Activated B cell treated with CpG ODN at 0.5 μM for 24 hours (primary cell): ENCODE measurements at regions of chr6 and their contacts with region 1.

Region 1: DNA sequence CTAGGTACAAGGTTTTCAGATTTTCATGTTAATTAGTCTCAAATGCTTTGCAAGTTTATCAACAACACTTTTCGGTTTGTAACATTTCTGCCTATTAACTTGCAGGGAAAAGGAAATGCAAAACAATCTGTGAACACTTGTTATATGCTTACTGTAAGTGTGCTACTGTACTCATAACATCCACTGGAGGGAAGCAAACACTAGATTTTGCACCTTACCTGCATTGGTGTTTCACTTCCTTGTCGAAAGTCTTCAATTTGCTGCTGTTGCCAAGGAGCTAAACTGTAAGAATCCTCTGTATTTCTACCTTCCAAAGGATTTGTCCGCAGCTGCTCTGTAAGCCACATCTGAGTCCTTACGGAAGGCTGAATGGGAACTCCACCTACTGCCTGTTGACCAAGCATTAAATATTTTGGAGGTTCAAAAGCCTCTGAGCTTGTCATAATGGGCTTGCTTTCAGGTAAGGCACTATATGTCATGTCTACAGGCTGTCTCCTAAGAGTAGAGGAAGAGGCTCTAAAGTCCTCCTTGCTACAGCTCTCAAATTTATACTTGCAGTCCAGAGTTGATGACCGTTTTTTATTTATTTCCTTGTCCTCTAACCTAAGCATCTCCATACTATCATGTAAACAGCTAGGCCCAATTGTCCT is 17.3 kb downstream of the PLN start:
- DNase-seq: peak; percentile 16
- ATAC-seq: peak; percentile 94
- H3K4me3 Mint-ChIP-seq: no peak overlapping the region
- H3K27ac Mint-ChIP-seq: no peak overlapping the region
- H3K4me1 Mint-ChIP-seq: peaks cover 8% of the 10 kb centered on the region
- H3K27me3 Mint-ChIP-seq: no peaks in the 10 kb centered on the region
- CTCF ChIP-seq: no peak

Region 2: DNA sequence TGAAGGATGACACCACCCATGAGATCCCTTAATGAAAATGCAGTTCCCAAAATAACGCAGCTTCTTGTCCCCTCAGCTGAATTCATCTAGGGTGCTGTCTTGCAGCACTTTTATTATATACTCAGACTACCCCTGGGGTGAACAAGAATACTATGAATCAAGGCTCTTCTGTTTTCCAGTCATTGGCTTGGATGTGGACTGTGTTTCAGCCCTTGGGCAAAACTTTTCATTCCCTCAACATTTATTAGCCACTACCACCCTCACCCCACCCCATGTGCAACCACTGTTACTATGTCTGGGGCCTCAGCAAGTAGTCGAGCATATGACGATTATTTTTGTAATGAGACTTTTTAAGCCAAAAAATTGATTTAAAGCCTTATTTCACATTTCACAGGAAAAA is 336.6 kb before region 1 on chr6:
- CTCF ChIA-PET with region 1: no interaction called
- POLR2A ChIA-PET with region 1: no interaction called
- intact Hi-C with region 1: no loop called
- DNase-seq: no peak
- ATAC-seq: no peak
- H3K4me3 Mint-ChIP-seq: no peak overlapping the region
- H3K27ac Mint-ChIP-seq: no peak overlapping the region
- H3K4me1 Mint-ChIP-seq: no peaks in the 10 kb centered on the region
- H3K27me3 Mint-ChIP-seq: no peaks in the 10 kb centered on the region
- CTCF ChIP-seq: no peak

Region 3: DNA sequence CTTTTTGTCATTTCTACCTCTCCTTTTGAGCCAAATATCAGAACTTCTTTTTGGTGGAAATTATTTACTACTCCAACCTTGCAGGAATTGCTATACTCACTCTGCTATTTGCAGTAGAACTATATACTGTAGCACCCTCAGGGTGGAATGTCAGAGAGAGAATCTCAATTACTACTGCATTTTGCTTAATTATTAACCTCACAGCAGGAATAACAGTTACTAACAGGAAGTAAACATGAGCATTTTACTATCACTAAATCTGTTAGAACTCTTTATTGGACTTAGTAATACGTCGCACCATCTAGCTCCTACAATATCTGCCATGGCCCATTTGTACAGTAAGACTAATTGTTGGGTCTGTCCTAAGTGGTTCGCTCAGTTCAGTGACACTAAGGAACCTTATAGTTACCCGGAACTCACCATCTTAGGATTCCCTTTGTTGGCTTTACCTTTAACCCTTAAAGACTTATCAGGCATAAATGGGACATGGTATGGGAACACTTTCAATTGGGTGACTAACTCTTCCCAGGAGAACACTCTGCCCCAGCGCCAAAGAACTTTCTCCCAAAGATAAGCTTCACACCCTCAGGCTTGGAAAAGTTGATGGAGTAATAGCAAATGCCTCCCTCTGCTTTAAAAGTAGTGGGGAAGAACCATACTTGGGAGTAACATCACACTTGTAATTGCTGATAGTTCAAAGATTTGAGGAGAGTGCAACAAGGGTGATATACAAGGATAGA is 21.5 kb after region 1 on chr6:
- CTCF ChIA-PET with region 1: interaction called, 17 read pairs
- POLR2A ChIA-PET with region 1: no interaction called
- intact Hi-C with region 1: no loop called
- DNase-seq: no peak
- ATAC-seq: no peak
- H3K4me3 Mint-ChIP-seq: no peak overlapping the region
- H3K27ac Mint-ChIP-seq: no peak overlapping the region
- H3K4me1 Mint-ChIP-seq: no peaks in the 10 kb centered on the region
- H3K27me3 Mint-ChIP-seq: no peaks in the 10 kb centered on the region
- CTCF ChIP-seq: no peak

Region 4: GRCh38 chr6:118724211-118724610 is 158.8 kb after region 1 on chr6:
- CTCF ChIA-PET with region 1: interaction called, 10 read pairs
- POLR2A ChIA-PET with region 1: no interaction called
- intact Hi-C with region 1: no loop called
- DNase-seq: no peak
- ATAC-seq: peak; percentile 74
- H3K4me3 Mint-ChIP-seq: peak overlapping the region; percentile 55
- H3K27ac Mint-ChIP-seq: peak overlapping the region; percentile 80
- H3K4me1 Mint-ChIP-seq: peaks cover 64% of the 10 kb centered on the region
- H3K27me3 Mint-ChIP-seq: no peaks in the 10 kb centered on the region
- CTCF ChIP-seq: no peak

Region 5: GRCh38 chr6:118770112-118770788 is 204.8 kb after region 1 on chr6:
- CTCF ChIA-PET with region 1: interaction called, 85 read pairs
- POLR2A ChIA-PET with region 1: no interaction called
- intact Hi-C with region 1: no loop called
- DNase-seq: no peak
- ATAC-seq: no peak
- H3K4me3 Mint-ChIP-seq: no peak overlapping the region
- H3K27ac Mint-ChIP-seq: no peak overlapping the region
- H3K4me1 Mint-ChIP-seq: peaks cover 7% of the 10 kb centered on the region
- H3K27me3 Mint-ChIP-seq: peaks cover under 1% of the 10 kb centered on the region
- CTCF ChIP-seq: no peak

Region 6: GRCh38 chr6:118787724-118788423 is 222.4 kb after region 1 on chr6:
- CTCF ChIA-PET with region 1: interaction called, 19 read pairs
- POLR2A ChIA-PET with region 1: no interaction called
- intact Hi-C with region 1: no loop called
- DNase-seq: no peak
- ATAC-seq: no peak
- H3K4me3 Mint-ChIP-seq: no peak overlapping the region
- H3K27ac Mint-ChIP-seq: peak overlapping the region; percentile 31
- H3K4me1 Mint-ChIP-seq: peaks cover 24% of the 10 kb centered on the region
- H3K27me3 Mint-ChIP-seq: no peaks in the 10 kb centered on the region
- CTCF ChIP-seq: no peak

Region 7: DNA sequence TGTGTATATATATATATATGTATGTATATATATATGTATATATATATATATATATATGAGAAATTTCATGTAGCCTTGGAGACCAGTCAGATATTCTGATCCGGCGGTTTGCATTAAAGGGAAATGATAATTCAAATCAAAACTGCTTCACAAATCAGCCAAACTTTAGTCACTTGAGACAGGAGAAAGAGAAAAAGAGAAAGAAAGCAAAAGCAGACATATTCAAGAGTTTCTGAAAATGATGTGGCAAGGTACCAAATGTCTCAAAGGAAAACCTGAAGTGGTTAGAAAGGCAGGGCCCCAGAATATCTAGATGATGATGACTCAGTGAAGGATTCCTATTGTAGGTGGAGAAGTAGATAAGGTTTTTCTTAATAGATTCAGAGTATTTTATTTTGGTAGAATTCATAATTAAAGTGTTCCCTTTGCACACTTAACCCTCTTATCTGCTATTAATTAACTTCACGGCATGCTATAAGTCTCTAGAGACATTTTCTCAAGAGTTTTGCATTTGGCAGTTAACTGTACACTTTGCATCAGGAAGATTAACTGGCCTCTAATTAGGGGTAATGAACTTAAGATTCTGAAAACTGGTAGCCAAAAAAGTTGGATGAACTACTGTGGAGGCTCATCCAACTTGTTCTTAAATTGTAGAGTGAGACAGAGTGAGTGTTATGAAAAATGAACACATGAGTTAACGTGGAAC is 278.4 kb after region 1 on chr6:
- CTCF ChIA-PET with region 1: no interaction called
- POLR2A ChIA-PET with region 1: no interaction called
- intact Hi-C with region 1: no loop called
- DNase-seq: no peak
- ATAC-seq: peak; percentile 84
- H3K4me3 Mint-ChIP-seq: no peak overlapping the region
- H3K27ac Mint-ChIP-seq: no peak overlapping the region
- H3K4me1 Mint-ChIP-seq: peaks cover 27% of the 10 kb centered on the region
- H3K27me3 Mint-ChIP-seq: no peaks in the 10 kb centered on the region
- CTCF ChIP-seq: no peak

Region 8: GRCh38 chr6:118893807-118894424 is 328.5 kb after region 1 on chr6 and contains the start of gene ASF1A:
- CTCF ChIA-PET with region 1: interaction called, 5 read pairs
- POLR2A ChIA-PET with region 1: no interaction called
- intact Hi-C with region 1: loop called (anchors 1 kb)
- DNase-seq: peak; percentile 86
- ATAC-seq: peak; percentile 59
- H3K4me3 Mint-ChIP-seq: peak within 1 kb of the TSS; percentile 99
- H3K27ac Mint-ChIP-seq: peak within 1 kb of the TSS; percentile 90
- H3K4me1 Mint-ChIP-seq: peaks cover 65% of the 10 kb centered on the region
- H3K27me3 Mint-ChIP-seq: no peaks in the 10 kb centered on the region
- CTCF ChIP-seq: no peak
- total RNA-seq, gene ASF1A: 12.1 and 13.1 TPM in 2 replicates

Region 9: GRCh38 chr6:119110601-119111548 is 545.4 kb after region 1 on chr6:
- CTCF ChIA-PET with region 1: interaction called, 30 read pairs
- POLR2A ChIA-PET with region 1: no interaction called
- intact Hi-C with region 1: loop called (anchors 1 kb)
- DNase-seq: no peak
- ATAC-seq: peak; percentile 42
- H3K4me3 Mint-ChIP-seq: no peak overlapping the region
- H3K27ac Mint-ChIP-seq: no peak overlapping the region
- H3K4me1 Mint-ChIP-seq: no peaks in the 10 kb centered on the region
- H3K27me3 Mint-ChIP-seq: peaks cover 3% of the 10 kb centered on the region
- CTCF ChIP-seq: no peak

Region 10: DNA sequence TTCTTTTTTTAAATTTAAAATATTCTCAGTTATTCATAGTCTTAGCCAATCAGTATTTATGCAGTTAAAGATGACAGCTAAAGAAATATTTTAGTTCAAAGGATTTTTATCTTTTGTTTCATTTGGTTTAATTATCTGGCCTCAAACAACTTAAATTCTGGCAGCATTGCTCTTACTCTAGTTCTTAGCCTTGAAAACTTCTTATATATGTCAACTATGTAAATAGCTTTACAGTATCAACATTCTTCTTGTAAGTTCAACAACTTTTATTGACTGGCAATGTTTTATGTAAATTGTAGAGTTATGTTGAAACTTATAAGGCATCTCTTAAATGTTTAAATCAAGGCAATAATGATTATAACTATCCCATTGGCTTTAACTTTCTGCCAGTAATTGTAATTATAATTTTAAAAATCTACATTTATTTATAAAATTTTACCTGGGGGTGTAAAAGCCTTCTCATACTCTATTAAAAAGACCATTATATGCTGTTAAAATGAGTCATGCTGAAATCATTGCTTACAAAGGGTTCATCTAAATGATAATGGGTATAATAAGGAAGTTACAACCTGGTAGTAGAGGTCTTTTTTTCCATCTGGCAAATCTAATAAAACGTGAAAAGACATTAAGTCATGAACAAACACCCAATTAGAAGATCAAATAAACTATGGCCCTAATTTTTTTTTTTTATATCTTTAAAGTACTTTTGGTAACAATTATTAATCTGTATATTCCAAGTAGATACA is 558.8 kb after region 1 on chr6:
- CTCF ChIA-PET with region 1: no interaction called
- POLR2A ChIA-PET with region 1: no interaction called
- intact Hi-C with region 1: no loop called
- DNase-seq: no peak
- ATAC-seq: no peak
- H3K4me3 Mint-ChIP-seq: no peak overlapping the region
- H3K27ac Mint-ChIP-seq: no peak overlapping the region
- H3K4me1 Mint-ChIP-seq: no peaks in the 10 kb centered on the region
- H3K27me3 Mint-ChIP-seq: no peaks in the 10 kb centered on the region
- CTCF ChIP-seq: no peak